Naive thymus-derived CD4-positive, alpha-beta T cell (primary cell): ENCODE measurements at regions of chr3 and their contacts with region 1.

Region 1: GRCh38 chr3:49454458-49454857 is 15.6 kb upstream of the DAG1 start:
- DNase-seq: no peak
- ATAC-seq: no peak
- H3K4me3 ChIP-seq: no peak overlapping the region
- H3K4me3 Mint-ChIP-seq: no peak overlapping the region
- H3K27ac ChIP-seq: no peak overlapping the region
- H3K27ac Mint-ChIP-seq: peak overlapping the region in 1 of 9 donors; percentile 63
- H3K4me1 ChIP-seq: no peaks in the 10 kb centered on the region
- H3K4me1 Mint-ChIP-seq: no peaks in the 10 kb centered on the region
- H3K27me3 ChIP-seq: no peaks in the 10 kb centered on the region
- H3K27me3 Mint-ChIP-seq: no peaks in the 10 kb centered on the region

Region 2: GRCh38 chr3:49171119-49171774 is 283.2 kb before region 1 on chr3 and contains the start of gene KLHDC8B:
- CTCF ChIA-PET with region 1: no interaction called
- POLR2A ChIA-PET with region 1: no interaction called
- intact Hi-C with region 1: loop called in 1 of 2 experiments (anchors 1 kb)
- DNase-seq: peak; percentile 65 to 89 (median 76)
- ATAC-seq: peak; percentile 88
- H3K4me3 ChIP-seq: peak within 1 kb of the TSS; percentile 95
- H3K4me3 Mint-ChIP-seq: peak within 1 kb of the TSS; percentile 83 to 94 (median 88)
- H3K27ac ChIP-seq: peak within 1 kb of the TSS; percentile 58
- H3K27ac Mint-ChIP-seq: peak within 1 kb of the TSS; percentile 61 to 92 (median 78)
- H3K4me1 ChIP-seq: peaks cover 11 to 26% of the 10 kb centered on the region in 2 donors
- H3K4me1 Mint-ChIP-seq: peaks cover 8 to 40% (median 26%) of the 10 kb centered on the region in 7 donors
- H3K27me3 ChIP-seq: no peaks in the 10 kb centered on the region
- H3K27me3 Mint-ChIP-seq: no peaks in the 10 kb centered on the region
- total RNA-seq, gene KLHDC8B: 1.5 to 7.1 (median 5.2) TPM

Region 3: GRCh38 chr3:49295489-49296058 is 158.9 kb before region 1 on chr3:
- CTCF ChIA-PET with region 1: interaction called, 14 read pairs
- POLR2A ChIA-PET with region 1: no interaction called
- intact Hi-C with region 1: loop called (anchors 1 kb)
- DNase-seq: peak in 7 of 9 donors; percentile 32 to 53 (median 48)
- ATAC-seq: peak; percentile 80
- H3K4me3 ChIP-seq: no peak overlapping the region
- H3K4me3 Mint-ChIP-seq: peak overlapping the region in 1 of 10 donors; percentile 19
- H3K27ac ChIP-seq: no peak overlapping the region
- H3K27ac Mint-ChIP-seq: peak overlapping the region; percentile 16 to 84 (median 42)
- H3K4me1 ChIP-seq: no peaks in the 10 kb centered on the region
- H3K4me1 Mint-ChIP-seq: peaks cover 0 to 7% (median 3%) of the 10 kb centered on the region in 7 donors
- H3K27me3 ChIP-seq: no peaks in the 10 kb centered on the region
- H3K27me3 Mint-ChIP-seq: no peaks in the 10 kb centered on the region

Region 4: GRCh38 chr3:49358217-49358883 is 96.1 kb before region 1 on chr3 and contains the start of gene GPX1:
- CTCF ChIA-PET with region 1: interaction called, 3 read pairs
- POLR2A ChIA-PET with region 1: no interaction called
- intact Hi-C with region 1: loop called (anchors 1 kb)
- DNase-seq: peak; percentile 45 to 89 (median 57)
- ATAC-seq: peak; percentile 87
- H3K4me3 ChIP-seq: peak within 1 kb of the TSS; percentile 85
- H3K4me3 Mint-ChIP-seq: peak within 1 kb of the TSS; percentile 88 to 99 (median 92)
- H3K27ac ChIP-seq: peak within 1 kb of the TSS; percentile 81
- H3K27ac Mint-ChIP-seq: peak within 1 kb of the TSS; percentile 92 to 98 (median 95)
- H3K4me1 ChIP-seq: peaks cover 17% of the 10 kb centered on the region in 2 donors
- H3K4me1 Mint-ChIP-seq: peaks cover 14 to 43% (median 25%) of the 10 kb centered on the region in 7 donors
- H3K27me3 ChIP-seq: no peaks in the 10 kb centered on the region
- H3K27me3 Mint-ChIP-seq: no peaks in the 10 kb centered on the region
- total RNA-seq, gene GPX1: 56.9 to 201 (median 86.9) TPM

Region 5: DNA sequence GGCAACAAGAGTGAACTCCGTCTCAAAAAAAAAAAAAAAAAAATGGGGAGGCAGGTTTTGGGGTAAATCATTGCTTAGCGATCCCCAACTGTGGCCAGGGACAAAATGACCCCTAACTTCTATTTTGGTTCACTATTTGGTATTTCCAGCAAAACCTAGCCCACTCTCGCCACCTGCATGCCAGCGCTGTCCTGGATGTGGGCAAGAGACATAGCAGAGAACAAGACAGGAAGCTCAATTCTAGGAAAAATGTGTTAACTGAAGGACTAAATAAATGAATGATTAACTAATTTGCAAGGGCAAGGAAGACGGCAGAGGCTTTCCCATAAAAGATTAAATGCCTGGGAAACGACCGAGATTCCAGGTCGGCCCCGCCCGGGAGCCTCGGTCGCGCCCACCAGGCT is 25.8 kb before region 1 on chr3:
- CTCF ChIA-PET with region 1: interaction called, 5 read pairs
- POLR2A ChIA-PET with region 1: interaction called, 5 read pairs
- intact Hi-C with region 1: loop called (anchors 1 to 2 kb)
- DNase-seq: peak in 1 of 9 donors; percentile 13
- ATAC-seq: no peak
- H3K4me3 ChIP-seq: peak overlapping the region; percentile 84
- H3K4me3 Mint-ChIP-seq: peak overlapping the region; percentile 88 to 98 (median 94)
- H3K27ac ChIP-seq: peak overlapping the region; percentile 83
- H3K27ac Mint-ChIP-seq: peak overlapping the region; percentile 49 to 96 (median 94)
- H3K4me1 ChIP-seq: peaks cover 0 to 5% of the 10 kb centered on the region in 2 donors
- H3K4me1 Mint-ChIP-seq: peaks cover 17 to 37% (median 28%) of the 10 kb centered on the region in 7 donors
- H3K27me3 ChIP-seq: no peaks in the 10 kb centered on the region
- H3K27me3 Mint-ChIP-seq: no peaks in the 10 kb centered on the region

Region 6: GRCh38 chr3:49769286-49769915 is 314.9 kb after region 1 on chr3:
- CTCF ChIA-PET with region 1: no interaction called
- POLR2A ChIA-PET with region 1: no interaction called
- intact Hi-C with region 1: no loop called
- DNase-seq: no peak
- ATAC-seq: no peak
- H3K4me3 ChIP-seq: no peak overlapping the region
- H3K4me3 Mint-ChIP-seq: peak overlapping the region in 1 of 10 donors; percentile 11
- H3K27ac ChIP-seq: no peak overlapping the region
- H3K27ac Mint-ChIP-seq: peak overlapping the region in 1 of 9 donors; percentile 3
- H3K4me1 ChIP-seq: peaks cover 0 to 5% of the 10 kb centered on the region in 2 donors
- H3K4me1 Mint-ChIP-seq: peaks cover 12 to 49% (median 36%) of the 10 kb centered on the region in 7 donors
- H3K27me3 ChIP-seq: no peaks in the 10 kb centered on the region
- H3K27me3 Mint-ChIP-seq: no peaks in the 10 kb centered on the region